Calu3 (cell line): ENCODE measurements at regions of chr1 and their contacts with region 1.

Region 1: GRCh38 chr1:223811634-223812415 is 33.9 kb downstream of the TP53BP2 start:
- DNase-seq: no peak
- H3K4me3 Mint-ChIP-seq: no peak overlapping the region
- H3K27ac Mint-ChIP-seq: no peak overlapping the region
- H3K4me1 Mint-ChIP-seq: peaks cover 31% of the 10 kb centered on the region
- H3K27me3 Mint-ChIP-seq: no peaks in the 10 kb centered on the region
- CTCF ChIP-seq: peak; percentile 51

Region 2: DNA sequence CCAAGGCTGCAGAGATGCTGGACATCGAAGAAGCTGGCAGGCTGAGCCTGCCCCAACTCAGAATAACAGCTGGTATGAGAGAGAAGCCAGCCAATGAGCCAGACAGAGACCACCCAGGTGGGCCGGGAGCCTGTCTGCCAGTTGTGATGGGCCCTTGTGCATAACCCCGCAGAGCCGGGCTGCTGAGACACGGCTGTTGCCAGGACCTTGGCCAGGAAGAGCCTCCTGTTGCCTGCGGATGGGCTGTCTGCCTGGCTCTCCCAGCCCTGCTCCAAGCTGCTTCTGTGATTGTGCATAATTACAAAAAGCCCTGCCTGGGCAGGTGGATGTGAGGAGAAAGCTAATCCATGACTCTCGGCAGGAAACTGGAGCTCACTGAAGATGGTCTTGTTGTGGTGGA is 272.8 kb before region 1 on chr1:
- CTCF ChIA-PET with region 1: no interaction called
- intact Hi-C with region 1: no loop called
- DNase-seq: no peak
- H3K4me3 Mint-ChIP-seq: no peak overlapping the region
- H3K27ac Mint-ChIP-seq: no peak overlapping the region
- H3K4me1 Mint-ChIP-seq: no peaks in the 10 kb centered on the region
- H3K27me3 Mint-ChIP-seq: peaks cover 5% of the 10 kb centered on the region
- CTCF ChIP-seq: no peak

Region 3: DNA sequence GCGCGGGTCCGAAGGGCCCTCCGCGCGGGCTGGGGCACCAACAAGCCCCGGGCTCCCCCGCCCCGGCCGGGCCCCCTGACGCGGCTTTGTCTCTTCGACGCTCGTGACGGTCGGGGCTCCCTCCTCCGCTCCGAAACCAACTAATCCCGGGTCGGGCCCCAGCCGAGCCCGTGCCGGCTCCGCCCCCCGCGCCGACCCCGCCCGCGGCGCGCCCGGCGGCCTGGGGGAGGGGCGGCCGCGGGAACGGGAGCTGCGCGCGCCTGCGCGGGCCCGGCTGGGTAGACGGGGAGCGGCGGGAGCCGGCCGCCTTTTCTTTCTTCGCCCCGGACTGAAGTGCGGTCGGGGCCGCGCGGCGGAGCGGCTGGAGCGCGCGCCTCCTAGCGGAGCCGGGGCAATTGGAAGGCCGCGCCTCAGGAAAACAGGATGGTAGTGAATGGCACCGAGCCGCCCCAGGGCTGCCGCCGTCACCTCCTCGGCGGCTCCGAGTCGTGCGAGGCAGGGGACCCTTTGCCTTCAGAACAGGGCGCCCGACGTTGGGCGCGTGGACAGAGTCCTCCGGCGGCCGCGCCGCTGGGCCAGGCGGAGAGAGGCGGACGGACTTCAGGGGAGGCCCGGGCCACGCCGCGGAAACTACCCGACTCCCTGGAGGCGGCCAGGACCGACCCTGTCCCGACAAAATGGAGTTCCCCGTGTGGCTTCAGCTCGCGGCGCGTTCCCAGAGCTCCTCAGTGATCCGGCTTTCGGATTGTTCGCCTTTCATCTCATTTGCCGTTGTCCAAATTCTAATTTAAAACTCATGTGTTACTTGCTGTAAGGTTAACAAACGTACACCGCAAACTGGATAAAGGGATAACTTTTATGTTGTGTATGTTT is 34.2 kb after region 1 on chr1 and contains the start of gene TP53BP2:
- CTCF ChIA-PET with region 1: interaction called, 8 read pairs
- intact Hi-C with region 1: loop called (anchors 5 kb)
- DNase-seq: peak; percentile 96
- H3K4me3 Mint-ChIP-seq: peak within 1 kb of the TSS; percentile 94
- H3K27ac Mint-ChIP-seq: peak within 1 kb of the TSS; percentile 93
- H3K4me1 Mint-ChIP-seq: peaks cover 24% of the 10 kb centered on the region
- H3K27me3 Mint-ChIP-seq: no peaks in the 10 kb centered on the region
- CTCF ChIP-seq: peak; percentile 86
- total RNA-seq, gene TP53BP2: 59.5 and 66.4 TPM in 2 replicates

Region 4: GRCh38 chr1:223887747-223888418 is 76.1 kb after region 1 on chr1:
- CTCF ChIA-PET with region 1: no interaction called
- intact Hi-C with region 1: loop called (anchors 10 kb)
- DNase-seq: peak; percentile 86
- H3K4me3 Mint-ChIP-seq: peak overlapping the region; percentile 43
- H3K27ac Mint-ChIP-seq: peak overlapping the region; percentile 46
- H3K4me1 Mint-ChIP-seq: peaks cover 35% of the 10 kb centered on the region
- H3K27me3 Mint-ChIP-seq: no peaks in the 10 kb centered on the region
- CTCF ChIP-seq: no peak

Region 5: GRCh38 chr1:224127925-224128819 is 316.3 kb after region 1 on chr1:
- CTCF ChIA-PET with region 1: no interaction called
- intact Hi-C with region 1: loop called (anchors 10 kb)
- DNase-seq: no peak
- H3K4me3 Mint-ChIP-seq: no peak overlapping the region
- H3K27ac Mint-ChIP-seq: no peak overlapping the region
- H3K4me1 Mint-ChIP-seq: peaks cover 14% of the 10 kb centered on the region
- H3K27me3 Mint-ChIP-seq: no peaks in the 10 kb centered on the region
- CTCF ChIP-seq: no peak